ENCODE measurements at regions of chr17 and their contacts with region 1.

Region 1: DNA sequence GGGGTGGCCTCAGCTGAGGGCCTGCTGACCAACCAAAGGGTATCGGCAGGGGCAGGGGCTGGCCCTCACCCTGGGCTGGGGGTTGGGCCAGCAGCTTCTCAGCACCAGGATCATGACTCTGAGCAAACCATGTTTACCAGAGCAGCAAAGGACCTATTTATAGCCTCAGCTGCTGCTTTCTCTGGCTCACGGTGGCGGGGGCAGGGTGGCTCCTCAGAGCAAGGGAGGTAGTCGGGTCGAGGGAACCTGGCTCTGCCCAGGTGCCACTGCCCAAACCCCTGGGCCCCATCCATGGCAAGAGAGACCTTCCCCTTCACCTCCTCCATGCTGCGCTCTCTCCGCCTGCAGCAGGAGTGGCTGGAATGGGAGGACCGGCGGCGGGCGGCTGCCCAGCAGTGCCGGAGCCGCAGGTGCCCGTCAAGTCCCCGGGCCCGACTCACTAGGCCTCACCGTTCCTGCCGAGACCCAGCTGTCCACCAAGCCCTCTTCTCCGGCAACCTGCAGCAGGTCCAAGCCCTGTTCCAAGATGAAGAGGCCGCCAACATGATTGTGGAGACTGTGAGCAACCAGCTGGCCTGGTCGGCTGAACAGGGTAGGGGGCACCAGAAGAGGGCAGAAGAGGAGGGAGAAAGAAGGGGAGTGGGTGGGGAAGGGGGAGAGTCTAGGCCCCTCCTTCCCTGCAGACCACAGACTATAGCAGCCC is at the start of gene ASB16:
- DNase-seq: peak; percentile 28
- ATAC-seq: peak; percentile 60
- H3K4me3 Mint-ChIP-seq: no peak within 1 kb of the TSS
- H3K27ac Mint-ChIP-seq: no peak within 1 kb of the TSS
- H3K4me1 Mint-ChIP-seq: peaks cover 23% of the 10 kb centered on the region
- H3K27me3 Mint-ChIP-seq: no peaks in the 10 kb centered on the region; the same call in 1 of the 2 replicates
- CTCF ChIP-seq: no peak
- total RNA-seq, gene ASB16: 0.11 to 0.23 TPM (median 0.14 TPM) in 3 replicates

Region 2: GRCh38 chr17:43940630-43941029 is 230.0 kb before region 1 on chr17:
- CTCF ChIA-PET with region 1: interaction called, 17 read pairs
- POLR2A ChIA-PET with region 1: no interaction called
- DNase-seq: peak; percentile 77
- ATAC-seq: peak; percentile 74
- H3K4me3 Mint-ChIP-seq: no peak overlapping the region
- H3K27ac Mint-ChIP-seq: no peak overlapping the region
- H3K4me1 Mint-ChIP-seq: peaks cover 20% of the 10 kb centered on the region
- H3K27me3 Mint-ChIP-seq: peaks cover 46% of the 10 kb centered on the region
- CTCF ChIP-seq: peak; percentile 56

Region 3: GRCh38 chr17:44095642-44096496 is 74.8 kb before region 1 on chr17:
- CTCF ChIA-PET with region 1: interaction called, 20 read pairs
- POLR2A ChIA-PET with region 1: interaction called, 6 read pairs
- DNase-seq: peak; percentile 85
- ATAC-seq: peak; percentile 86
- H3K4me3 Mint-ChIP-seq: peak overlapping the region; percentile 73
- H3K27ac Mint-ChIP-seq: peak overlapping the region; percentile 99
- H3K4me1 Mint-ChIP-seq: peaks cover 36% of the 10 kb centered on the region
- H3K27me3 Mint-ChIP-seq: no peaks in the 10 kb centered on the region
- CTCF ChIP-seq: no peak

Region 4: DNA sequence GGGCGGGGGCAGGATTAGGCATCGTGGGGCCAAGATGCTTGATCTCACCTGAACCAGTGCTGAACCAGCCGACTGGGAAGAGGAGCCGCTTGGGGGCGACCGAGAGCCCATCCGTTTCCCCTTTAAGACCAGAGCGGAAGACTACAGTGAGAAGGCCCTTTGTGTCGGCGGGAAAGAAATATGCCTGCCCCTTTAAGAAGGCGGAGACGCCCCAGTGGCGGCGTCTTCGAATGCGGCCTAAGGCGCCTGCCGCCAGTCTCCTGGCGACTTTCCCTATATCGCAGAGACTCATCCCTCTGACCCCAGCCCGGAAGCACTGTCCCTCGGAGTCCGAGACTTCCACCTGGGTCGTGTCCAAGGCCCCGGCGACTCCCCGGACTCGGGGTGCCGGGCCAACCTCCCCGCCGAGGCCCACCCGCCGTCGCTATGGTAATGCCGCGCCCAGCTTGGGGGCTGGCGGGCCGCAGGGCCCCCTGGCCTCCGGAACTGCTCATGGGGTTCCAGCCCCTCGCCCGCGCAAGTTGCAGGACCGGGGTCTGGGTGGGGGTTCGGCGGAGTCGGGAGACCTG is 28.8 kb before region 1 on chr17 and contains the start of gene HROB:
- CTCF ChIA-PET with region 1: interaction called, 15 read pairs
- POLR2A ChIA-PET with region 1: interaction called, 3 read pairs
- DNase-seq: peak; percentile 100
- ATAC-seq: peak; percentile 84
- H3K4me3 Mint-ChIP-seq: peak within 1 kb of the TSS; percentile 96
- H3K27ac Mint-ChIP-seq: peak within 1 kb of the TSS; percentile 96
- H3K4me1 Mint-ChIP-seq: peaks cover 25% of the 10 kb centered on the region
- H3K27me3 Mint-ChIP-seq: no peaks in the 10 kb centered on the region; the same call in 1 of the 2 replicates
- CTCF ChIP-seq: peak; percentile 68
- total RNA-seq, gene HROB: 22.4 to 23.9 TPM (median 23.7 TPM) in 3 replicates

Region 5: DNA sequence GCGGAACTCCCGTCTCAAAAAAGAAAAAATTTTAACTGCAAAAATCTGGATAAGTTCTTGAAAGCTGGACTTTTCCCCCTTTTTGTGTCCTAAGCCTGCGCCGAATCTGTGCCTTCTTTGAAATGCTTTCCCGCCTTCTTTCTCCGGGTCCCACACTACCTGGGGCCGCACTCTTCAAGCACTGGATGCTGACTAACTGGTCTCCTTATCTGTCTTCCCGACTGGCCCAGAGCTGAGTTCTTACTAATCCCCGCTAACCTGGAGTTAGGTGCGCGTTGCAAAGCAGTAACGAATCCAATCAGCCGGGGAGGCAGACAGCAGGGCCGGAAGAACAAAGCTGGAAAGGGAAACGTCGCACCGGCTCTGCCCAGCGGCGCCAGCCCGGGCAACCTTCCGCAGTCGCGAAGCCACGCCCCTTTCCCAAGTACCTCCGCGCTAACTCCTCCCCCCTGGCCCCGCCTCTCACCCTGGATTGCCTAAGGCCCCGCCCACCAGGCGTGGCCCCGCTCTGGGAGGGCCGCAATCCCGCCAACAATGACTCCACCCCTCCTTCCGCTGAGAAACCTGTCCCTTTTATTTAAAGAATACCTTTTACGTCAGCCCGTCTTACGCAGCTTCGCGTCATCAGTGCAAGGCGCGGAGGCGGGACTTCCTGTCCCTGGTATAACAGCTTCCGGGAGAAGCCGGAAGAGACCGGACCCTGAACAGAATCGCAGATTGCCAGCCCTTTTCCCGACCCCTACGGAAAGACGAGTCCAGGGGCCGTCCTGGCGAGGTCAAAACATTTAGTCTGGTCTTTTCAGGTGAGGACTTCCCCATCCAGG is 15.9 kb after region 1 on chr17 and contains the start of gene TMUB2:
- CTCF ChIA-PET with region 1: interaction called, 31 read pairs
- POLR2A ChIA-PET with region 1: interaction called, 7 read pairs
- DNase-seq: peak; percentile 100
- ATAC-seq: peak; percentile 93
- H3K4me3 Mint-ChIP-seq: peak within 1 kb of the TSS; percentile 100
- H3K27ac Mint-ChIP-seq: peak within 1 kb of the TSS; percentile 99
- H3K4me1 Mint-ChIP-seq: peaks cover 18% of the 10 kb centered on the region
- H3K27me3 Mint-ChIP-seq: no peaks in the 10 kb centered on the region
- CTCF ChIP-seq: no peak
- total RNA-seq, gene TMUB2: 21.9 to 26.9 TPM (median 25.3 TPM) in 3 replicates

Region 6: GRCh38 chr17:44229090-44229489 is 58.4 kb after region 1 on chr17:
- CTCF ChIA-PET with region 1: no interaction called
- POLR2A ChIA-PET with region 1: no interaction called
- DNase-seq: no peak
- ATAC-seq: no peak
- H3K4me3 Mint-ChIP-seq: no peak overlapping the region
- H3K27ac Mint-ChIP-seq: no peak overlapping the region
- H3K4me1 Mint-ChIP-seq: no peaks in the 10 kb centered on the region
- H3K27me3 Mint-ChIP-seq: no peaks in the 10 kb centered on the region
- CTCF ChIP-seq: no peak

Region 7: DNA sequence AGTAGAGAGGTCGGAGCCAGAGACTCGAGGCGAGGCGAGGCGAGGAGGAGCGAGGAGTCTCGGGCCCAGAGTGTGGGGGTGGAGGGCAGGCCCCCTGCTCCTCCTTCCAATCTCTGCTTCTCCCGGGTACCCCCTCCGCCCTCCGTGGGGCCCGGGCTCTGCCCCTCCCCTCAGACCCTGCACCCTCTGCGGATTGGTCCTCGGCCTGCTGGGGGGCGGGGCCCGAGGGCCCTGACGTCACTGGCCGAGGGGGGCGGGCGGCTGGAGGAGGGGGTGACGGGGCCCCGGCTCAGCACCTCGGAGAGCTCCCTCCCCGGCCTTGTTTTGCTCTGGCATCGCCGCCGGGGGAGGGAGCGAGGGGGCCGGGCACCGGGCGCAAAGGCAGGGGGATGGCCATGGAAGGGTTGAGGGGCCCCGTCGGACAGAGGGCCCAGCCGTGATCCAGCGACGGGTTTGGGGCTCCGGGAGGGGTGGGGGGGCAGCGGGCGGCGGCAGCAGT is 137.7 kb after region 1 on chr17 and contains the start of gene RUNDC3A:
- CTCF ChIA-PET with region 1: no interaction called
- POLR2A ChIA-PET with region 1: no interaction called
- DNase-seq: peak; percentile 96
- ATAC-seq: peak; percentile 91
- H3K4me3 Mint-ChIP-seq: peak within 1 kb of the TSS; percentile 69
- H3K27ac Mint-ChIP-seq: peak within 1 kb of the TSS; percentile 72; the same call in 1 of the 2 replicates
- H3K4me1 Mint-ChIP-seq: peaks cover 41% of the 10 kb centered on the region
- H3K27me3 Mint-ChIP-seq: peaks cover 9% of the 10 kb centered on the region
- CTCF ChIP-seq: no peak
- total RNA-seq, gene RUNDC3A: 5.1 to 6.5 TPM (median 5.2 TPM) in 3 replicates

Region 8: DNA sequence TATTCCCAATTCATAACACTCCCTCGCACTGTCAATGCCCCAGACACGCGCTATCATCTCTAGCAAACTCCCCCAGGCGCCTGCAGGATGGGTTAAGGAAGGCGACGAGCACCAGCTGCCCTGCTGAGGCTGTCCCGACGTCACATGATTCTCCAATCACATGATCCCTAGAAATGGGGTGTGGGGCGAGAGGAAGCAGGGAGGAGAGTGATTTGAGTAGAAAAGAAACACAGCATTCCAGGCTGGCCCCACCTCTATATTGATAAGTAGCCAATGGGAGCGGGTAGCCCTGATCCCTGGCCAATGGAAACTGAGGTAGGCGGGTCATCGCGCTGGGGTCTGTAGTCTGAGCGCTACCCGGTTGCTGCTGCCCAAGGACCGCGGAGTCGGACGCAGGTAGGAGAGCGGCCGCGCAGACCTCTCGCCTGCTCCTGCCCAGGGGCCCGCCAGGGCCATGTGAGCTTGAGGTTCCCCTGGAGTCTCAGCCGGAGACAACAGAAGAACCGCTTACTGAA is 174.3 kb after region 1 on chr17 and contains the start of gene GRN:
- CTCF ChIA-PET with region 1: interaction called, 22 read pairs
- POLR2A ChIA-PET with region 1: no interaction called
- DNase-seq: peak; percentile 95
- ATAC-seq: peak; percentile 99
- H3K4me3 Mint-ChIP-seq: peak within 1 kb of the TSS; percentile 85
- H3K27ac Mint-ChIP-seq: peak within 1 kb of the TSS; percentile 95
- H3K4me1 Mint-ChIP-seq: peaks cover 8% of the 10 kb centered on the region
- H3K27me3 Mint-ChIP-seq: peaks cover 20% of the 10 kb centered on the region
- CTCF ChIP-seq: no peak
- total RNA-seq, gene GRN: 177 to 185 TPM (median 185 TPM) in 3 replicates

Region 9: GRCh38 chr17:44522883-44523671 is 352.4 kb after region 1 on chr17:
- CTCF ChIA-PET with region 1: no interaction called
- POLR2A ChIA-PET with region 1: no interaction called
- DNase-seq: peak; percentile 91
- ATAC-seq: peak; percentile 99
- H3K4me3 Mint-ChIP-seq: no peak overlapping the region
- H3K27ac Mint-ChIP-seq: no peak overlapping the region
- H3K4me1 Mint-ChIP-seq: no peaks in the 10 kb centered on the region
- H3K27me3 Mint-ChIP-seq: peaks cover 14% of the 10 kb centered on the region
- CTCF ChIP-seq: 0 out of 2 replicates have a peak, but pooled peaks have one; percentile 51

Measured in WTC11 (cell line).